CD14-positive monocyte (primary cell): ENCODE measurements at regions of chr14 and their contacts with region 1.

Region 1: DNA sequence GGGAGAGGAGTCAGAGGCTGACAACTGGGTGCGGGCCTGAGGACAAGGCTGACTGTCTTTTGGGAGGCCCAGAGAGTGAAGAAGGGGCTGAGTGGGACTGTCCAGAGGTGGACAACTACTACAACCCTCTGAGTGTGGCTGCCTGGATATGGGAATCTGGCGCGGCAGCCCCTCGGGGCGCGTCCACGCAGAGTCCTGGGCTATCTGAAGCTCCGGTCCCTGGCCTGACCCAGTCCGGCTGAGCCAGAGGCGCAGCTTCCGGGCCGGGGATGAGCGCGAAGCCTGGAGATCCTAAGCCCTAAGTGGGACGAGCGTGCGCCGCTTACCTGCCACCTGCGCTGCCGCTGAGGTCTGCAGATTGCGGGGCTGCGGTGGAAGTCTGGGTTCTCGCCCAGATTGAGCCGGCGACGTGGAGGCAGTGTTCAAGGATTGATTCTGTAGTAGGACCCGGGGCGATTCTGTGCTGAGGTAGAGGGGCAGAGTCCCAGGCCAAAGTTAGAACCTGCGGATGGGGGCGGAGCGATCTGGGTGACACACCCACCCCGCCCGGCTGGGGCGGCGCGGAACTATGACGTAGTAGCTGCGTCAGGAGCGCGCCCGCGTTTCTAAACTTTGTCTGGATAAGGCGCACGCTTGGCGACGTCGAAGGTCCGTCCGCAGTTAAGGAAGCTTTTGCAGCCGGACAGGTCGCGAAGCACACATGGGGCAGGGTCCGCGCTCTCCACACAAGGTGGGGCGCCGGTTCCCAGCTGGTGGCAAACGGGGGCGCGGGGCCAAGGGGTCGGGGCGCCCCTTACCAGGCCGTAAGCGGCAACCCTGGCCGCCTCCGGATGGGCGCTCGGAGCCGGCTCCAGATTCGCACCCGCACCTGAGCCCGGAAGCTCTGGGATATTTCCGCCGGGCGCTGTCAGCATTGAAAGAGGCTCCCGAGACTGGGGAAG is at the starts of genes DHRS1 and NOP9:
- DNase-seq: peak; percentile 90 to 92 (median 91)
- H3K4me3 ChIP-seq: peak within 1 kb of the TSS; percentile 45 to 92 (median 78)
- H3K4me3 Mint-ChIP-seq: peak within 1 kb of the TSS; percentile 89
- H3K27ac ChIP-seq: peak within 1 kb of the TSS; percentile 78 to 94
- H3K27ac Mint-ChIP-seq: peak within 1 kb of the TSS; percentile 88 to 95 (median 93)
- H3K4me1 ChIP-seq: peaks cover 34 to 46% of the 10 kb centered on the region in 2 donors
- H3K4me1 Mint-ChIP-seq: peaks cover 40% of the 10 kb centered on the region
- H3K27me3 ChIP-seq: no peaks in the 10 kb centered on the region
- H3K27me3 Mint-ChIP-seq: peaks cover 0 to 1% (median 0%) of the 10 kb centered on the region in 3 donors
- CTCF ChIP-seq: no peak
- polyA plus RNA-seq, gene DHRS1: 31.6 to 49.4 (median 48.8) TPM
- polyA plus RNA-seq, gene NOP9: 1.2 to 16.6 (median 1.3) TPM

Region 2: GRCh38 chr14:24114536-24115450 is 184.7 kb before region 1 on chr14 and contains the starts of genes DCAF11 and NRL:
- intact Hi-C with region 1: loop called in 1 of 2 experiments (anchors 10 kb)
- DNase-seq: peak; percentile 100
- H3K4me3 ChIP-seq: peak within 1 kb of the TSS; percentile 87 to 90 (median 89)
- H3K4me3 Mint-ChIP-seq: peak within 1 kb of the TSS; percentile 89 to 95
- H3K27ac ChIP-seq: peak within 1 kb of the TSS; percentile 99 to 100
- H3K27ac Mint-ChIP-seq: peak within 1 kb of the TSS; percentile 98 to 99 (median 99)
- H3K4me1 ChIP-seq: peaks cover 19 to 27% of the 10 kb centered on the region in 2 donors
- H3K4me1 Mint-ChIP-seq: peaks cover 18% of the 10 kb centered on the region
- H3K27me3 ChIP-seq: no peaks in the 10 kb centered on the region
- H3K27me3 Mint-ChIP-seq: peaks cover 0 to 6% (median 2%) of the 10 kb centered on the region in 3 donors
- CTCF ChIP-seq: no peak
- polyA plus RNA-seq, gene DCAF11: 45.6 to 56.6 (median 48.8) TPM
- polyA plus RNA-seq, gene NRL: 1.1 to 1.5 (median 1.3) TPM

Region 3: DNA sequence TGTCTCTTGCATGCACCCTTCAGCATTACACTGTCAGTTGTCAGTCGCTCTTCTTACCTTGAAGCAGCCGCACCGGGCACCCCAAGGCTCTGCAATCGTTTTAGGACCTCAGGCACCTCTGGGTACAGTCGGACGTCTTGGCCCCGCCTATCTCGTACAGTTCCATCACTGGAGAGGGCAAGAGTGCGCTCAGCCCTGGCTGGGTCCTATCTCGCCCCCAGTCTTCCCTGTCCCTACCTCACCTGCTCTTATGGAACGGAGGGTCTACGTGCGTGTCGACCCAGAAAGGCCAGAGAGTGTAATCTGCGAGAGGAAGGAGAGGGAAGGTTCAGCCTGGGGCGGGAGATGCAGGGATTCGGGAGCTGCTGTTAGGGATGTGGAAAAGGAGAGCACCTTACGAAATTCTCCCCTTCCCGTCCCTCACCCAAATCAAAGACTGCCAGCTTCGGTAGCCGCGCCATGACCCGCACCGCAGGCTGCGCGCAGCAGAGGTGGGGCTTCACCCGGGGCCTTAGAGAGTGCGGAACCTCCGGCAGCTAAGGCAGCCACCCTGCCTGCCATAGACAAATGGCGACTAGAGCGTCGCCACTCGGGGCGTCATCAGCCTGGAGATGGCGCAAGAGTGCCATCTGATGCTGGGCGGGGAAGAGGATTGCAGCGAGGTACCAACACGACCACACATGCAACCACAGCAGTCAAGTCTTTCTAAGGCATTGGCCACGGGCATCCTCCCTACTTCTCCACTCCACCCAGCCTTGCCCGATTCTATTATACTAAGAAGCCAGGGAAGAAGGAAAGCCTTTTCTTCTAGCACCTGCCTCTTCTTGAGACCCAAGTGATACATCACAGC is 83.8 kb before region 1 on chr14 and contains the start of gene MDP1:
- intact Hi-C with region 1: loop called in 1 of 2 experiments (anchors 10 kb)
- DNase-seq: peak; percentile 91 to 92 (median 91)
- H3K4me3 ChIP-seq: peak within 1 kb of the TSS; percentile 71 to 90 (median 77)
- H3K4me3 Mint-ChIP-seq: peak within 1 kb of the TSS; percentile 86 to 93
- H3K27ac ChIP-seq: peak within 1 kb of the TSS; percentile 87 to 98
- H3K27ac Mint-ChIP-seq: peak within 1 kb of the TSS; percentile 95 to 100 (median 98)
- H3K4me1 ChIP-seq: peaks cover 30 to 36% of the 10 kb centered on the region in 2 donors
- H3K4me1 Mint-ChIP-seq: peaks cover 31% of the 10 kb centered on the region
- H3K27me3 ChIP-seq: no peaks in the 10 kb centered on the region
- H3K27me3 Mint-ChIP-seq: peaks cover 0 to 4% (median 1%) of the 10 kb centered on the region in 3 donors
- CTCF ChIP-seq: peak; percentile 50
- polyA plus RNA-seq, gene MDP1: 17.5 to 49.6 (median 37.5) TPM

Region 4: DNA sequence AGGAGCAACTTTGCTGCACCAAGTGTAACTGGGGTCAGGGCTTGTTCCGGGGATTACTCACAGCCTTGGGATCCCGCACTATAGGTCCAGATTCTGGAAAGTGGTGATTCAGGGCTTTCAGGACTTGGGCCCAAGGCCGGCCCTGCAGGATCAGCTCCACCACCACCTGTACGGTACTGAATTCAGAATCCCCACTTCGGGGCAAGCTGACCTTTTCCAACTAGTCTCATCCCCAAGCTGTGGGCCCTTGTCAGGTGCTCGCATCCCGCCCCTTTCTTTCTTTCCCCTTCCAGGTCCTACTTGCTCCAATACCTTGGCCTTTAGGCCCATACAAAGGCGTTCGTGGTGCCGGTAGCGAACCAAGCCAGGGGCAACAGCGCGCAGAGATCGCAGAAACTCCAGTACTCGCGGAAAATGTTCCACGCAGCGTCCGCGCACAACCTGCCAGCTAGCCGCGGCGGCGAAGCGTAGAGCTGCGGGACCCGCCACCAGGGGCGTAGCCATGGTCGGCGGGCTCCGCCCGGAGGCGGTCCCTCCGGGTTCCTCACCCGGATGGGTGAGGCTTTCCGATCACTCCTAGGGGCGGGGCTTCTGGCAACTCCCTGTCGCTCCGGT is 57.6 kb before region 1 on chr14:
- intact Hi-C with region 1: loop called (anchors 2 to 5 kb)
- DNase-seq: peak; percentile 88 to 93 (median 92)
- H3K4me3 ChIP-seq: peak overlapping the region; percentile 48 to 82 (median 78)
- H3K4me3 Mint-ChIP-seq: peak overlapping the region; percentile 90 to 97
- H3K27ac ChIP-seq: peak overlapping the region; percentile 94 to 98
- H3K27ac Mint-ChIP-seq: peak overlapping the region; percentile 99 to 100 (median 100)
- H3K4me1 ChIP-seq: peaks cover 50 to 72% of the 10 kb centered on the region in 2 donors
- H3K4me1 Mint-ChIP-seq: peaks cover 66% of the 10 kb centered on the region
- H3K27me3 ChIP-seq: no peaks in the 10 kb centered on the region
- H3K27me3 Mint-ChIP-seq: no peaks in the 10 kb centered on the region
- CTCF ChIP-seq: peak; percentile 33

Region 5: DNA sequence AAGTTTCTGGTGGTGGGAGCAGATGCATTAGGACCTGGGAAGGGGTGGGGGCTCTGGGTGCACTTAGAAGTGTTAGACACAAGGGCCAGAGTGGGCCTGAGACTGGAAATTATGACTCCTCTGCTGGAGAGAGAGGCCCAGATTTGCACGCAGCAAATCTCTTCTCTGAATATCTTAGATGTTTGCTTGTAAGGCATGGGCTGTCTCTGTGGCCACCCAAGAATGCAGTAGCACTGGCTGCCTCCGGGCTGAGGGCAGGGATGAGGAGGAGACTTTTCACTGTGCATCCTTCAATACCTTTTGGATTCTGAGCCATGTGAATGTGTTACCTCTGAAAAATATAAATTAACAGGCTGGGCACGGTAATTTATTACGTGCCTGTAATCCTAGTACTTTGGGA is 14.2 kb before region 1 on chr14:
- intact Hi-C with region 1: no loop called
- DNase-seq: no peak
- H3K4me3 ChIP-seq: no peak overlapping the region
- H3K4me3 Mint-ChIP-seq: no peak overlapping the region
- H3K27ac ChIP-seq: no peak overlapping the region
- H3K27ac Mint-ChIP-seq: peak overlapping the region in 1 of 7 donors; percentile 37
- H3K4me1 ChIP-seq: peaks cover 25 to 26% of the 10 kb centered on the region in 2 donors
- H3K4me1 Mint-ChIP-seq: peaks cover 35% of the 10 kb centered on the region
- H3K27me3 ChIP-seq: no peaks in the 10 kb centered on the region
- H3K27me3 Mint-ChIP-seq: peaks cover 0 to 3% (median 1%) of the 10 kb centered on the region in 3 donors
- CTCF ChIP-seq: no peak

Region 6: DNA sequence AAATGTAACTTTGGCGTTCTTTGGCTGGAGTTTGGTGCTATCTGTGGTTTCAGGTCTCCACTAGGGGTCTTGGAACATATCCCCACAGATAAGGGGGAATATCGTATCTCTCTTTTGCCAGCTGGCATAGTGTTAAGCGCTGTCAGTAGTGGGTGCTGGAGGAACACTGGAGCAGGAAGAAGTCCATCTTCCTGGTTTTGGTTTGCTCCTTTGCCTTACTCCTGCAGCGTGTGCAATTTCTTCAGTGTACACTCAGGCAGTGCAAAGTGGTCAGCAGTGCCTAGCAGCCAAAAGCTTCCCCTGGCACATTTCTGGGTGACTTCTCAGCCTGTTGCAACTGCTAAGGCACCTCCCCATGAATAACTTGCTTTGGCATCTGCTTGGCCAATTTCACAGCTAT is 52.0 kb after region 1 on chr14:
- intact Hi-C with region 1: no loop called
- DNase-seq: no peak
- H3K4me3 ChIP-seq: no peak overlapping the region
- H3K4me3 Mint-ChIP-seq: no peak overlapping the region
- H3K27ac ChIP-seq: no peak overlapping the region
- H3K27ac Mint-ChIP-seq: no peak overlapping the region
- H3K4me1 ChIP-seq: peaks cover 11 to 13% of the 10 kb centered on the region in 2 donors
- H3K4me1 Mint-ChIP-seq: peaks cover 16% of the 10 kb centered on the region
- H3K27me3 ChIP-seq: peaks cover 3 to 9% of the 10 kb centered on the region in 2 donors
- H3K27me3 Mint-ChIP-seq: peaks cover 5 to 24% (median 20%) of the 10 kb centered on the region in 3 donors
- CTCF ChIP-seq: no peak